ENCODE measurements at regions of chr6 and their contacts with region 1.

Region 1: DNA sequence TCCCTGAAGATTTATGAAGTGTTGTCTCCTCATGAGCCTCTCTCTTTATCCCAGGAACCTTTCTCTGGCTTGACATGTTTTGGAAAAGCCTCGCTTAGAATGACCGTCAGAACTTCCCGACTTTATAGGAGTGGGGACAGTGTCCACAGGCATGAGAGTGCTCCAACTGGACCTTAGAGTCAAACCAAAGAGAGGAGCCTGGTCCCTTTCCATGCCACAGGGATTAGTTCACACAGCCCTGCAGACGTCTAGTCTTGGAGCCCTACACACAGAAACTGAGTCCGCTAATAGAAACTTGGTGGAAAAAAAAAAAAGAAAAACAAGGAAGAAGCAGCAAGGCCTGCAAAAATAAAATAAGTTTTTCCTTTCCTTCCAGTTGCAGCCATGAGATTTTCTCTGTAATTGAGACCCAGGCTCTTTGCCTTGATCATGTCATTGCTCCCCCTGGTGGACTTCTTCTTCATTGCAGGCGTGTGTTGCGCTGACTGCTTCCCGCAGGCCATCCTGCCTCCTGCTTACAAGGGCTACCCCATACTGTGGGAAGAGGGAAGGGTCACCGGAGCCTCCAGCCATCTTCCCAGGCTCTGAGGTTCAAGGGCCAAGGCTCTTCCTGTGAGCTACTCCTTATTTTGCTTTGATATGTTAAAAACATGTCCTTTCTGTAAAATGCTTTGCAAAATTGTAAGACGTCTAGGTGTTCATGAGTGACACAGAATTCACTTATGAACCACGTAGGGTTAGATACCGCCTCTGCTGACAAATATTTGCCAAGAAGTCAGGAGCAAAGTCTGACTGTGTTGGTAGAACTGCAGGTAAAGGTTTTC is 201.0 kb downstream of the UST start:
- DNase-seq: peak; percentile 78 to 93 (median 86)
- ATAC-seq: peak; percentile 86 to 88
- H3K4me3 ChIP-seq: no peak overlapping the region
- H3K27ac ChIP-seq: no peak overlapping the region
- H3K4me1 ChIP-seq: peaks cover 2% of the 10 kb centered on the region
- H3K27me3 ChIP-seq: no peaks in the 10 kb centered on the region

Region 2: GRCh38 chr6:148559848-148560433 is 387.9 kb before region 1 on chr6:
- intact Hi-C with region 1: loop called in 1 of 4 experiments (anchors 5 kb)
- DNase-seq: peak; percentile 78 to 92 (median 91)
- ATAC-seq: peak; percentile 86 to 87
- H3K4me3 ChIP-seq: peak overlapping the region; percentile 39
- H3K27ac ChIP-seq: no peak overlapping the region
- H3K4me1 ChIP-seq: no peaks in the 10 kb centered on the region
- H3K27me3 ChIP-seq: no peaks in the 10 kb centered on the region

Region 3: GRCh38 chr6:148578245-148578732 is 369.5 kb before region 1 on chr6:
- intact Hi-C with region 1: loop called in 3 of 4 experiments (anchors 5 kb)
- DNase-seq: peak; percentile 82 to 93 (median 90)
- ATAC-seq: peak; percentile 99
- H3K4me3 ChIP-seq: no peak overlapping the region
- H3K27ac ChIP-seq: no peak overlapping the region
- H3K4me1 ChIP-seq: no peaks in the 10 kb centered on the region
- H3K27me3 ChIP-seq: no peaks in the 10 kb centered on the region

Region 4: GRCh38 chr6:148746363-148747144 is 201.3 kb before region 1 on chr6 and contains the start of gene UST:
- intact Hi-C with region 1: loop called (anchors 5 to 10 kb)
- DNase-seq: peak; percentile 85 to 95 (median 92)
- ATAC-seq: peak; percentile 92 to 95
- H3K4me3 ChIP-seq: peak within 1 kb of the TSS; percentile 79
- H3K27ac ChIP-seq: peak within 1 kb of the TSS; percentile 63
- H3K4me1 ChIP-seq: no peaks in the 10 kb centered on the region
- H3K27me3 ChIP-seq: no peaks in the 10 kb centered on the region
- total RNA-seq, gene UST: 4.4 to 5.9 (median 4.9) TPM

Region 5: DNA sequence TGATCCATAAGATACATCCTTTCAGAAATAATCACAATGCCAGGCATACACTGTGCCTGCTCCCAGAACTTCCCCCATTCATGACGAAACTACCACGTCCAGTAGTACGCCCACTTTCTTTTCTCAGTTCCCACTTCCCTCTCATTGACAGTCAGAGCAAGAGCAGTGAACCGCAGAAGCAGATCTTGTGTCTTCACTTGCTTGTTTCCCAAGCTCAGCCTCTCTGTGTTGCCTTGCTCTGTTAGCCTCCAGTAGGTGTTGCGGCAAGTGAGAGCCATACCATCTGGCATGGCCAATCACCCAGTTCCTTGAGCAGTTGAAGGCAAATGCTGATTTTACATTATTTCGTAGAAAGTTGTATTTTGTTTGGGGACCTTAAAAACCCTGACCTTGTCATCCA is 189.3 kb before region 1 on chr6:
- intact Hi-C with region 1: loop called in 1 of 4 experiments (anchors 10 kb)
- DNase-seq: no peak
- ATAC-seq: peak in 1 of 2 donors; percentile 57
- H3K4me3 ChIP-seq: no peak overlapping the region
- H3K27ac ChIP-seq: no peak overlapping the region
- H3K4me1 ChIP-seq: no peaks in the 10 kb centered on the region
- H3K27me3 ChIP-seq: no peaks in the 10 kb centered on the region

Measured in right cardiac atrium (tissue), 5 donors.